Activated T-helper 2 cell treated with anti-CD3 and anti-CD28 coated beads, Interferon-gamma antibody, Interleukin-2, Interleukin-4, amounts not matched to agents 10 μg/mL and 5 μg/mL and 100 μg/mL, durations not matched to agents 14 hours and 24 hours and 36 hours (primary cell): ENCODE measurements at regions of chrX and their contacts with region 1.

Region 1: DNA sequence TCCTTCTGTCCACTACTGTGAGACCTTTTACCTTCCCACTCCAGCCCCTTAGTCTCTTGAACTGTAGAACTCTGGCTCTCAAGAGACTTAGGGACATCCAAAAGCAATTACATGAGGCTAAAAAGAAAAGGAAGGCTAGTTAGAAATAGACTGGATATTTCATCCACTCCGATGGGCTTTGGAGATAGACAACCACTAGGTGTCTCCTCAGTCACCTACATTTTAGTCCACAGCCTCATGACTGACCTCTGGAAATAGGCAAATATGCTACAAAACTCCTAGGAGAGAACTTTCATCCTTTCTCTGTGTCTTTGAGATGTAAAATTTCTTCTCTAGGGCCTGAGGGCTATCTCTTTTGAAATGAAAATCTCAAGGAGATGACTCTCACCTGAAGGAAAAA is 45.1 kb upstream of the LAMP2 start:
- DNase-seq: no peak
- H3K4me3 Mint-ChIP-seq: no peak overlapping the region
- H3K27ac Mint-ChIP-seq: no peak overlapping the region
- H3K4me1 Mint-ChIP-seq: no peaks in the 10 kb centered on the region
- H3K27me3 Mint-ChIP-seq: no peaks in the 10 kb centered on the region

Region 2: GRCh38 chrX:120560842-120561633 is 46.8 kb after region 1 on chrX and contains the start of gene CUL4B:
- intact Hi-C with region 1: no loop called
- DNase-seq: peak; percentile 88
- H3K4me3 Mint-ChIP-seq: peak within 1 kb of the TSS; percentile 98
- H3K27ac Mint-ChIP-seq: peak within 1 kb of the TSS; percentile 93
- H3K4me1 Mint-ChIP-seq: peaks cover 29% of the 10 kb centered on the region
- H3K27me3 Mint-ChIP-seq: no peaks in the 10 kb centered on the region
- total RNA-seq, gene CUL4B: 26.9 and 30.7 TPM in 2 replicates

Region 3: DNA sequence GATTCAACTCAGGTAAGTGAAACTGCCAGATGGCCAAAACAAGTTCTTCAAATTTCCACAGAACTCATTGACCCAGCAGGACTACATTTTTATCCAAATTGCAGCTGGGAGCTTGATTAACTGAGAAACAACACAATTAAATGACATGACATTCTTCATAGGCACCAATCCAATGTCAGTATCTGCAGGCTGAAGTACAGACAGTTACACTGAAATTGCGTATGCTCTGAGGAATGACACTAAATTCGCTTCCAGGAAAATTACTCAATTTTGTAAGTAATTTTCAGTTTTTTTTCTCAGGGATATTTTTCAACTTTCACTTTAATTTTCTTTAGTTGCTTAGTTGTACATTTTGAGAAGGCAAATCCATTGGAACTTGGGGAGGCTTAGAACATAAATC is 111.1 kb after region 1 on chrX:
- intact Hi-C with region 1: no loop called
- DNase-seq: no peak
- H3K4me3 Mint-ChIP-seq: no peak overlapping the region
- H3K27ac Mint-ChIP-seq: no peak overlapping the region
- H3K4me1 Mint-ChIP-seq: peaks cover 20% of the 10 kb centered on the region
- H3K27me3 Mint-ChIP-seq: no peaks in the 10 kb centered on the region

Region 4: DNA sequence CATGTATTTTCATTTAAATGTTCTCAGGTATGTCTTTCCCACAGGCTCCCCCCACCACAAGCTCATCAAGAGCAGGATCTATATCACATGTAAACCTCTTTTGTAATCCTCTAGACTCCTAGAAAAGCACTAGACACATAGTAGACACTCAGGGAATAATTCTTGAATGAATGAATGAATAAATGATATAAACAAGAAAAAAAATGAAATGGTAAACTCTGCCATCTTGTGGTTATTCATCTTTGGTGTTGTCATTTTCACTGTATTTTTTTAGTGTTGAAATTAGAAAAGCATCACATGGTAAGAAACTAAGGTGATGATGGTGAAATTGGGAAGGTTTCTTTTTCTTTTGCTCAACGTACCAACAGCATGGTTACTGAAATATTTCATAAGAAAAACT is 149.8 kb after region 1 on chrX:
- intact Hi-C with region 1: loop called (anchors 5 kb)
- DNase-seq: no peak
- H3K4me3 Mint-ChIP-seq: no peak overlapping the region
- H3K27ac Mint-ChIP-seq: no peak overlapping the region
- H3K4me1 Mint-ChIP-seq: peaks cover 3% of the 10 kb centered on the region
- H3K27me3 Mint-ChIP-seq: no peaks in the 10 kb centered on the region

Region 5: GRCh38 chrX:120769576-120770341 is 255.5 kb after region 1 on chrX:
- intact Hi-C with region 1: loop called (anchors 1 kb)
- DNase-seq: no peak
- H3K4me3 Mint-ChIP-seq: no peak overlapping the region
- H3K27ac Mint-ChIP-seq: no peak overlapping the region
- H3K4me1 Mint-ChIP-seq: peaks cover 5% of the 10 kb centered on the region
- H3K27me3 Mint-ChIP-seq: no peaks in the 10 kb centered on the region